Ascending aorta (tissue), 2 donors: ENCODE measurements at regions of chr1 and their contacts with region 1.

Region 1: DNA sequence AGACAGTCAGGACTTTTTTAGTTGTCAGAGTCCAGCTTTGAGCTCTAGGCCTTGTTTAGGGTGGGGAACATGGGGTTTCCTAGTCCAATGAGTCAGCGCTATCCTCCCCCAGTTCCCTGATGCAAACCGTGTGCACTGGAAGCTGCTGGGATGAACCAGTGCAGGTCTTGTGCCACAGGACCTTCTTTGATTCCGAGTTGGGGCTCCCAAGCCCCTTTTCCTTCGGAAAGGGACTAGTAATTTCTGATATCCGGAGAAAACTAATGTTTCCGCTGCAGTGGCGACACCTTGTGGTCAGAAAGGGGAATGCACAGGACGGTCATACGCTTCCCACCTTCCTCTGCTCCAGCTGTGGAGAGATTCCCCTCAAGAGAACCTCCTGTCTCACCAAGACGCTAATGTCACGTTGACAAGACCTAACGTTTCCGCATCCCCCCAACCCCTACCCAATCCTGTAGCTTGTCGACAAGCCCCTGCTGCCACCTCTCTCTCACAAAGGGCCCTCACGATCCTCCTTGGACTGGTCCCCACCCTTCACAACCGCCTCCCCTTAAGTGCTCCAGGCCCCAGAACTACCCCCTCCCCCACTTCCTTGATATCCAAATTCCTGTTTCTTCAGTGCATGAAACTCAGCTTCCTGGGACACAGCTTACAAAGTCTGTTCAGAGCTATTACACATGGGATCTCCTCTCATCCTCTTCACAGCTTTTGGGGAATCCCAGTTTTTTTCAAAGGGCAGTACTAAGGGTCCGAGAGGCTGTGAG is 30.9 kb downstream of the GPA33 start:
- DNase-seq: peak in 1 of 2 donors; percentile 83
- H3K4me3 ChIP-seq: peak overlapping the region in 1 of 2 donors; percentile 27
- H3K27ac ChIP-seq: no peak overlapping the region
- H3K4me1 ChIP-seq: no peaks in the 10 kb centered on the region
- H3K27me3 ChIP-seq: no peaks in the 10 kb centered on the region
- CTCF ChIP-seq: peak; percentile 77 to 97 (median 95)

Region 2: DNA sequence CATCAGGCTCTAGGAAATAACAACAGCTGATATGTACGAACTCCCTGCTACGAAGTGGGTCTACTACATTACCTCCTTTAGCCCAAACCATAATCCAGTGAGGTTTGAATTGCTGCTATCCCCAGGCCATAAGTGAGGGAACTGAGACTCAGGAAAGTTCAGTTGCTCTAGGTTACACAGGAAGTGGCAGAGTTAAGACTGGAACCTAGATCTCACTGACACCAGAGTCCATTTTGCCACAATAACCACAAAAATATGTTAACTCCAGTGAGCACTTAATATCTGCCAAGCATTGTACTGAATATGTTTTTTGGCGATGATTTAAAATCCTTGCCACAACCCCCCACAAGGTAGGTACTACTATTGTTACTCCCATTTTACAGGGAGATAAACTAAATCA is 174.3 kb before region 1 on chr1:
- intact Hi-C with region 1: loop called (anchors 1 kb)
- DNase-seq: no peak
- H3K4me3 ChIP-seq: no peak overlapping the region
- H3K27ac ChIP-seq: no peak overlapping the region
- H3K4me1 ChIP-seq: peaks cover 0 to 3% of the 10 kb centered on the region in 2 donors
- H3K27me3 ChIP-seq: peaks cover 3% of the 10 kb centered on the region
- CTCF ChIP-seq: no peak

Region 3: GRCh38 chr1:166910396-166910994 is 148.7 kb before region 1 on chr1:
- intact Hi-C with region 1: loop called (anchors 2 kb)
- DNase-seq: peak in 1 of 2 donors; percentile 70
- H3K4me3 ChIP-seq: no peak overlapping the region
- H3K27ac ChIP-seq: no peak overlapping the region
- H3K4me1 ChIP-seq: no peaks in the 10 kb centered on the region
- H3K27me3 ChIP-seq: no peaks in the 10 kb centered on the region
- CTCF ChIP-seq: peak in 2 of 3 experiments; percentile 27 to 45

Region 4: DNA sequence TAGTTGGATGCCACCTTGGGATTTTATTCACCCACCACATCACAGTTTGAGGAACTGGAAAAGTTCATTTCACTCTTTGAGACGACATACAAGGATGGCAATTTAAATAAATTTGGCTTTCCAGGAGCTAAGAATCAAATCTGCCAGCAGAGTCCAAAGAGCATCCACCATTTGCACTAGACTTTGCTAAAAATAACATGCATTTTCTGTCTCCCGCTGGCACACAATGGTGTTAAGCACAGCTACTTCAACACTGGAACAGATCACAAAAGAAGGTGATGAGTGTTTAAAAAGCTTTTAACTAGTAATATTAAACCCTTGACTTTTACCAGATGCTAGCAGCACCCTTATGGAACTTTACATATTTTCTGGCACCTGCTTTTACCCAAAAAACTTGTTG is 25.6 kb before region 1 on chr1:
- intact Hi-C with region 1: no loop called
- DNase-seq: no peak
- H3K4me3 ChIP-seq: no peak overlapping the region
- H3K27ac ChIP-seq: no peak overlapping the region
- H3K4me1 ChIP-seq: no peaks in the 10 kb centered on the region
- H3K27me3 ChIP-seq: no peaks in the 10 kb centered on the region
- CTCF ChIP-seq: no peak

Region 5: GRCh38 chr1:167196166-167196565 is 136.9 kb after region 1 on chr1:
- intact Hi-C with region 1: no loop called
- DNase-seq: no peak
- H3K4me3 ChIP-seq: no peak overlapping the region
- H3K27ac ChIP-seq: no peak overlapping the region
- H3K4me1 ChIP-seq: no peaks in the 10 kb centered on the region
- H3K27me3 ChIP-seq: no peaks in the 10 kb centered on the region
- CTCF ChIP-seq: no peak